BJ (cell line): ENCODE measurements at regions of chr12 and their contacts with region 1.

Region 1: DNA sequence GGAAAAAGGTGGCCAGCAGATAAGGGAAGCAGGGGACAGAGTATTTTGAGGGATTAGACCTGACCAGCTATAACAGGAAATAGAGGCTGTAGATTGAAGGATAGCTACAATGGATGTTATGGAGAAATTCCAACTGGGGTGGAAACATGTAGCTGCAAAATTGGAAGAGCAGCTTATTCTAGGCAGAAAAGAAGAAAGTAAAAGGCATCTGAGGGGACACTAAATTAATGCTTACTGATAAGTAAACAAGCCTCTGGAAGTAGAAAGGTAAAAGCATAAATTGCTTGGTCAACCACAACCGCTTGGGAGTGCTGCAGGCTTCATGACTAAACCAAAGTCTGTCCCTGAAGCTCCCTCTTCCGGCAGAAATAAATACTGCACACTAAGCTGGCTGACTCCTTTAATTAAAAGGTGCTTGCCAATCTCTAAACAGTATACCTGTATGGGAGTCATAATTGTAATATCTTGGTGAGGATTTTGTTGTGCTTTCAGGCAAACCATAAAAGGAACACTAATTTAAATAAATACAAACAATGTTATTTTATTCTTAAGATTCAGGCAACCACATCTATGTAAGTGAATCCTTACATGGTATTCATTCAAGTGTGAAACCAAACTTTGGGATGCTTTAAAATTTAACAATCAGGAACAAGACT is 7.7 kb downstream of the UBC start:
- DNase-seq: peak; percentile 61
- H3K4me3 ChIP-seq: no peak overlapping the region
- H3K27me3 ChIP-seq: no peaks in the 10 kb centered on the region
- CTCF ChIP-seq: peak; percentile 96

Region 2: DNA sequence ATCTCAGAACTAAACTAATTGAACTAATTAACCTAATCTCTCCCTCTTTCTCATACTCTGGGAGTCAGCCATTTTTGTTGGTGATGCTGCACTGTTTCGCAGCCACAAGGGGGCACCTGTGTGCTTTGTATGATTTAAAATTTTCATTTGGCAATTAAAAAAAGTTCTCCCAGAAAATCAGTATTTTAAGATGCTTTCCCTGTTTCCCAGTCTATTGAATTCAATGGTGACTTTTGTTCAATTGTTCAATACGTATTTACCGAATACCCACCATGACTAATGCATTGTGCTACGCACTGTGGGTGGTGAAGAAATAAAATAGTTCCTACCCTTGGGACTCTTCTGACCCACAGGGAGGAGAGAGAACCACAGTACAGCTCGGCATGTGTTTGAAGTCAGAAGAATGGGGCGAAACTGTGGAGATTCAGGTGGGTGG is 870.0 kb before region 1 on chr12:
- CTCF ChIA-PET with region 1: interaction called, 18 read pairs
- POLR2A ChIA-PET with region 1: no interaction called
- DNase-seq: no peak
- H3K4me3 ChIP-seq: no peak overlapping the region
- H3K27me3 ChIP-seq: no peaks in the 10 kb centered on the region
- CTCF ChIP-seq: peak; percentile 87

Region 3: GRCh38 chr12:124625867-124626675 is 280.7 kb before region 1 on chr12:
- CTCF ChIA-PET with region 1: no interaction called
- POLR2A ChIA-PET with region 1: no interaction called
- DNase-seq: no peak
- H3K4me3 ChIP-seq: no peak overlapping the region
- H3K27me3 ChIP-seq: no peaks in the 10 kb centered on the region
- CTCF ChIP-seq: no peak

Region 4: GRCh38 chr12:124796303-124796960 is 110.3 kb before region 1 on chr12:
- CTCF ChIA-PET with region 1: interaction called, 15 read pairs
- POLR2A ChIA-PET with region 1: no interaction called
- DNase-seq: no peak
- H3K4me3 ChIP-seq: no peak overlapping the region
- H3K27me3 ChIP-seq: no peaks in the 10 kb centered on the region
- CTCF ChIP-seq: no peak

Region 5: DNA sequence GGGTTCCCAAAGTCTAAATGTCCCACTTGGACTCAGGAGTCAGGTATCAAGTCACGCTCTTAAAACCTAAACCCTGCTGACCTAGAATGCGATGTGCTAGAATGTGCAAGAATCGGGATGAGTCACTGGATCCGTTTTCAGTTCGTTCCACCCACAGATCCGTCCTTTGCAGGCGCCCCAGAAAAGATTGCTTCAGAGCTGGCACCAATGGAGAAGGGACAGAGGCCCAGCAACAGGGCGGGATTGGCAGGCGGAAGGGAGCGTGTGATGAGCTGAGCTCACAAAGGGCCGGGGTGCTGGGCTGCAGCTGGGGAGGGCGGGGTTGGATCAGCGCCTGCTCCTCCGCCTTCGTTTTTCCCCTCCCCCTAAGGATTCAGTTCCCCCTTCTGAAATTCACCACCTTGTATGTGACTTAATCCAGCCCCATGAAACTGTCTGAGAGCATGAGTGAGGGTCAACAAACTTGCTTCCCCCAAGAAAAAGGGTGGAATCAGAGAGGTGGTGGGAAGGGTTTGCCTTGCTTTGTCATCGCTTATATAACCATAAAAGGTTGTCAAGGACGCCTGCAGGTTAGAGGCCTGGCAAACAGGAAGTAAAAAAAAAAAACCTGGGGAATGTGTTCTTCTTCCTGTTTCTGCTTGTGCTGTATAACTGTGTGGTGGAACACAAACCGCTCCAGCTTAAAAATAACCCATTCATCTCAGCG is 10.6 kb after region 1 on chr12:
- CTCF ChIA-PET with region 1: interaction called, 10 read pairs
- POLR2A ChIA-PET with region 1: interaction called, 3 read pairs
- DNase-seq: peak; percentile 99
- H3K4me3 ChIP-seq: peak overlapping the region; percentile 22; the same call in 1 of the 2 replicates
- H3K27me3 ChIP-seq: no peaks in the 10 kb centered on the region
- CTCF ChIP-seq: no peak

Region 6: DNA sequence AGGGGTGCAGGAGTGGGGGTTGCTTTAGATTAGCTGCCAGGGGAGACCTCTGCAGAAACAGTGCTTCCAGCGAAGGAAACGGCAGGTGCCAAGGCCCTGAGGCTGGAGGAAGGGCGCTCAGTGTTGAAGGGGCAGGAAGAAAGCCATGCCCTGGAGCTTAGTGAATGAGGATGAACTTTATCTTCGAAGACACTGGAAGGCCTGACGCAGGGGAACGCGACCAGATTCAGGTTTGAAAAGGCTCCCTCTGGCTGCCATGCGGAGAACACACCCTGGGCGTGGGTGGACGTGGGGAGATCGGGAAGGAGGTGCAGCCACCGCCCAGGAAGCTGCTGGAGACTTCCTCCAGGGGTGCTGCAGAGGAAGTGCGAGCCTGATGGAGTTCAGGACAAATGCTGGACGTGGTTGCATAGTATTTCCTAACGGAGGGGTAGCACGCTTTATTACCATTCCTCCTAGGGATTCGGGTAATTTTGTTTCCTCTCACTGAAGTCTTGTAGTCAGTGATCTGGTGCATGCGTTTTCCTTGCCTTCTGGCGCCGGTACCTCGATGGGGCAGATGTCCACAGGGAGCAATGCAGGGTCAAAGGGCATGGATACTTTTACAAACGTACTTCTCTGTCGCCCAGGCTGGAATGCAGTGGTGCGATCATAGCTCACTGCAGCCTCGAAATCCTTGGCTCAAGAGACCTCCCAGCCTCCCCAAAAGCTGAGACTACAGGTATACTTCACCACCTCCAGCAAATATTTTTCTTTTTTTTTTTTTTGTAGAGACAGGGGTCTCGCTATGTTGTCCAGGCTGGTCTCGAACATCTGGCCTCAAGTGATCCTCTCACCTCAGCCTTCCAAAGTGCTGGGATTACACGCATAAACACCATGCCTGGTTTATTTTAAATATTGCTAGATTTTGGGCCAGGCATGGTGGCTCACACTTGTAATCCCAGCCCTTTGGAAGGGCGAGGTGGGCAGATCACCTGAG is 34.1 kb after region 1 on chr12:
- CTCF ChIA-PET with region 1: interaction called, 88 read pairs
- POLR2A ChIA-PET with region 1: interaction called, 9 read pairs
- DNase-seq: peak; percentile 63
- H3K4me3 ChIP-seq: peak overlapping the region; percentile 27
- H3K27me3 ChIP-seq: no peaks in the 10 kb centered on the region
- CTCF ChIP-seq: peak; percentile 96

Region 7: GRCh38 chr12:124946447-124946793 is 39.7 kb after region 1 on chr12:
- CTCF ChIA-PET with region 1: interaction called, 88 read pairs
- POLR2A ChIA-PET with region 1: no interaction called
- DNase-seq: no peak
- H3K4me3 ChIP-seq: no peak overlapping the region
- H3K27me3 ChIP-seq: no peaks in the 10 kb centered on the region
- CTCF ChIP-seq: no peak

Region 8: GRCh38 chr12:124956571-124956970 is 49.8 kb after region 1 on chr12:
- CTCF ChIA-PET with region 1: no interaction called
- POLR2A ChIA-PET with region 1: no interaction called
- DNase-seq: no peak
- H3K4me3 ChIP-seq: no peak overlapping the region
- H3K27me3 ChIP-seq: no peaks in the 10 kb centered on the region
- CTCF ChIP-seq: no peak

Region 9: DNA sequence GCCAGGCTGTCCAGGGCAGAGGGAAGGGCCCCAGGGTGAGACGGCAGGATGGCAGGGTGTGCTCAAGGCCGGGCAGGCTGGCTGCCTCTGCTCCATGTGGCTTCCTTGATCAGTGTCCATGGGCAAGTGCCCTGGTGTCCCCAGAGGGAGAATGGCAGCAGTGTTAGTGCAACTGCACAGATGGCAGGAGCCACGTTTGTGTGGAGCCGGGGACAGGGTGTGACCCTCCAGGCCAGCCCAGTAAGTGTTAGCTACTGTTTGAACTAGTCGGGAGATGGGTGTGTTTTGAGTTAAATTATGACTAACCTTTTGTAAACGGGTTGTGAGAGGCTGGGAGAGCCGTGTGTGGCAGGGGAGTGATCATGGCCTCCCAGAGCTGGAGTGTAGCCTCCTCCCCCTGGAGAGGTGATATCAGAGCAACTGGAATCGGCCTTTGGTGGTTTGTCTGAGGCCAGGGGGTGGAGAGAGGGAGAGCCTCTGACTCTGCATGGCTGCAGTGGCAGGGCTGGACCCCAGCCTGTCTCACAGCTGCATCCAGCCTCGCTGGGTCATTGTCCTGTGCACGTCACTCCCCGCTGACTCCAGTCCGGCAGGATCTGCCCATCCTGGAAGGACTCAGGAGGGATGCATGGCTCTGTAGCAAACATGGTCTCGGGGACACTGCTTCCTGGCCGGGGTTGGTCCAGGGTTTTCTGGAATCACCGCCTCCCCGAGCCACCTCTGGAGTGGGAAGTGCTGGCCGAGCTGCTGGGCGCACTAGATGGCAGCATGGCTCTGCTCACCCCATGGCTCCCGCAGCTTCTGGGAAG is 186.3 kb after region 1 on chr12:
- CTCF ChIA-PET with region 1: no interaction called
- POLR2A ChIA-PET with region 1: no interaction called
- DNase-seq: no peak
- H3K4me3 ChIP-seq: no peak overlapping the region
- H3K27me3 ChIP-seq: no peaks in the 10 kb centered on the region
- CTCF ChIP-seq: no peak